Activated CD4-positive, alpha-beta memory T cell treated with anti-CD3 and anti-CD28 coated beads for 36 hours (primary cell): ENCODE measurements at regions of chrX and their contacts with region 1.

Region 1: GRCh38 chrX:136496770-136497598 is at the start of gene HTATSF1:
- DNase-seq: peak; percentile 92
- H3K4me3 Mint-ChIP-seq: peak within 1 kb of the TSS; percentile 93
- H3K27ac Mint-ChIP-seq: peak within 1 kb of the TSS; percentile 96
- H3K4me1 Mint-ChIP-seq: peaks cover 17% of the 10 kb centered on the region
- H3K27me3 Mint-ChIP-seq: peaks cover 2% of the 10 kb centered on the region
- total RNA-seq, gene HTATSF1: 49.4 to 53.4 TPM

Region 2: GRCh38 chrX:135973548-135974278 is 523.3 kb before region 1 on chrX and contains the start of gene MMGT1:
- CTCF ChIA-PET with region 1: no interaction called
- POLR2A ChIA-PET with region 1: no interaction called
- intact Hi-C with region 1: loop called (anchors 1 kb)
- DNase-seq: peak; percentile 89
- H3K4me3 Mint-ChIP-seq: peak within 1 kb of the TSS; percentile 93
- H3K27ac Mint-ChIP-seq: peak within 1 kb of the TSS; percentile 93
- H3K4me1 Mint-ChIP-seq: peaks cover 37% of the 10 kb centered on the region
- H3K27me3 Mint-ChIP-seq: no peaks in the 10 kb centered on the region
- total RNA-seq, gene MMGT1: 20.6 to 21.4 TPM

Region 3: DNA sequence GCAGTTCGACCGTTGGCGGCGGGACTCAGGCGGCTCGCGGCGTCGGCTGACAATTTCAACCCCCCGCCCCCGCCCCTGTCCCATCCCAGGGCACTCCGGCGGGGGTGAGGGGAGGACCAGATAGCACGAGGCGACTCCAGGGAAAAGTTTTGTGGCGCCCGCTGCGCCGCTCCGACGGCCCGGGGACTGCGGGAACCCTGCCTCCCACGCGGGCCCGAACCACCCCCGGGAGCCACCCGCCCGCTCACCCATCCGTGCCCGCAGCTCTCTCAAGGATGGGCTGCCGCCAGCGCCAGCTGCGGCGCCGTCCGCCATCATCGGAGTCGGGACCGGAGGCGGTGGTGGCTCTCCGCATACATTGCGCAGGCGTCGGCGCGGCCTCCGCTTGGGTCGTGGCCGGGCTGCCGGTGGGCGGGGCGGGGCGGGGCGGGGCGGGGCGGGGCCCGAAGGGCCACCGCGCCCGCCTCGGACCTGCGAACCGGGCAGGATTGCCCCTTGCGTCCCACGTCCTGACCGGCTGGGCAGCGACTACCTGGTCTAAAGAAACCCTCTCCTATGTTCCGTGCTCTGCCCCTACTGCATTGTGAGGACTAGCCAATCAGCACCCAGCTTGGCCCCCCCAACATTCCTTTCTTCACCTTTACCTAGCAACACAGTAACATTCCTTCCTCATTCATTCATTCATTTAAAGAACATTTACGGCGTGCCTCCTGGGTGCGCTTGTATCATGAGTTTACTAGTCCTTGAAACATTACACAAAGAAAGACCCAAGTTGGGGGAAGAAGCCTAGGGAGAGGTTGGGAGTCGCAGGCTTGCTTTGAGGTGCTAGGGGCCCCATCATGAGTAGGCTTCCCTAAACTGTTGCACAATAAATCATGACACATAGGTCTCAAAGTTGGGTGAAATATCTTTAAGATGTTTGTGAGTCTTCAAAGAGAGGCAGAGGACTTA is 245.7 kb before region 1 on chrX and contains the start of gene MAP7D3:
- CTCF ChIA-PET with region 1: no interaction called
- POLR2A ChIA-PET with region 1: no interaction called
- intact Hi-C with region 1: loop called (anchors 2 kb)
- DNase-seq: peak; percentile 76
- H3K4me3 Mint-ChIP-seq: peak within 1 kb of the TSS; percentile 82
- H3K27ac Mint-ChIP-seq: peak within 1 kb of the TSS; percentile 77
- H3K4me1 Mint-ChIP-seq: peaks cover 11% of the 10 kb centered on the region
- H3K27me3 Mint-ChIP-seq: no peaks in the 10 kb centered on the region
- total RNA-seq, gene MAP7D3: 18.2 to 20.5 TPM

Region 4: GRCh38 chrX:136652822-136653723 is 156.1 kb after region 1 on chrX:
- CTCF ChIA-PET with region 1: no interaction called
- POLR2A ChIA-PET with region 1: no interaction called
- intact Hi-C with region 1: loop called (anchors 10 kb)
- DNase-seq: peak; percentile 62
- H3K4me3 Mint-ChIP-seq: peak overlapping the region; percentile 93
- H3K27ac Mint-ChIP-seq: peak overlapping the region; percentile 99
- H3K4me1 Mint-ChIP-seq: peaks cover 54% of the 10 kb centered on the region
- H3K27me3 Mint-ChIP-seq: no peaks in the 10 kb centered on the region

Region 5: DNA sequence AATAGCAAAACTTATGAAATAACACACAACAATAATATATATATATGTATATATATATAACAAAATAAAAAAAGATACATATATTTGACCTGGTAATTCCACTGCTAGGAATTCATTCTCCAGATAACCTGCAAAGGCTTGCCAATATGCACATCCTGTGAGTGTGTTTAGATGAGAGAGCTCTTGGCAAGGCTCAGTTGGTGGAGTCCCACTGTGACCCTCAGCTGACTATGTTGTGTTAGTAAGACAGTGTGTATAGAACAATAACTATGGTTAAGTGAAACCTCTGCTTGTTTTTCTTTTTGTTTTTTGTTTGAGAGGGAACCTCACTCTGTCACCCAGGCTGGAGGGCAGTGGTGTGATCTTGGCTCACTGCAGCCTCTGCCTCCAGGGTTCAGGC is 423.0 kb after region 1 on chrX:
- CTCF ChIA-PET with region 1: no interaction called
- POLR2A ChIA-PET with region 1: no interaction called
- intact Hi-C with region 1: loop called (anchors 10 kb)
- DNase-seq: no peak
- H3K4me3 Mint-ChIP-seq: no peak overlapping the region
- H3K27ac Mint-ChIP-seq: no peak overlapping the region
- H3K4me1 Mint-ChIP-seq: peaks cover 2% of the 10 kb centered on the region
- H3K27me3 Mint-ChIP-seq: no peaks in the 10 kb centered on the region